ENCODE measurements at regions of chr17 and their contacts with region 1.

Region 1: GRCh38 chr17:42388381-42389134 is at the start of gene STAT3:
- DNase-seq: peak; percentile 99 to 100 (median 100)
- ATAC-seq: peak; percentile 83 to 93 (median 92)
- H3K4me3 ChIP-seq: peak within 1 kb of the TSS; percentile 75 to 81
- H3K4me3 Mint-ChIP-seq: peak within 1 kb of the TSS; percentile 90 to 95 (median 94)
- H3K27ac ChIP-seq: peak within 1 kb of the TSS; percentile 98
- H3K27ac Mint-ChIP-seq: peak within 1 kb of the TSS; percentile 100
- H3K4me1 ChIP-seq: peaks cover 13 to 20% of the 10 kb centered on the region in 2 experiments
- H3K4me1 Mint-ChIP-seq: peaks cover 48 to 52% (median 50%) of the 10 kb centered on the region in 3 donors
- H3K27me3 ChIP-seq: no peaks in the 10 kb centered on the region
- H3K27me3 Mint-ChIP-seq: no peaks in the 10 kb centered on the region
- total RNA-seq, gene STAT3: 113 to 242 (median 129) TPM

Region 2: DNA sequence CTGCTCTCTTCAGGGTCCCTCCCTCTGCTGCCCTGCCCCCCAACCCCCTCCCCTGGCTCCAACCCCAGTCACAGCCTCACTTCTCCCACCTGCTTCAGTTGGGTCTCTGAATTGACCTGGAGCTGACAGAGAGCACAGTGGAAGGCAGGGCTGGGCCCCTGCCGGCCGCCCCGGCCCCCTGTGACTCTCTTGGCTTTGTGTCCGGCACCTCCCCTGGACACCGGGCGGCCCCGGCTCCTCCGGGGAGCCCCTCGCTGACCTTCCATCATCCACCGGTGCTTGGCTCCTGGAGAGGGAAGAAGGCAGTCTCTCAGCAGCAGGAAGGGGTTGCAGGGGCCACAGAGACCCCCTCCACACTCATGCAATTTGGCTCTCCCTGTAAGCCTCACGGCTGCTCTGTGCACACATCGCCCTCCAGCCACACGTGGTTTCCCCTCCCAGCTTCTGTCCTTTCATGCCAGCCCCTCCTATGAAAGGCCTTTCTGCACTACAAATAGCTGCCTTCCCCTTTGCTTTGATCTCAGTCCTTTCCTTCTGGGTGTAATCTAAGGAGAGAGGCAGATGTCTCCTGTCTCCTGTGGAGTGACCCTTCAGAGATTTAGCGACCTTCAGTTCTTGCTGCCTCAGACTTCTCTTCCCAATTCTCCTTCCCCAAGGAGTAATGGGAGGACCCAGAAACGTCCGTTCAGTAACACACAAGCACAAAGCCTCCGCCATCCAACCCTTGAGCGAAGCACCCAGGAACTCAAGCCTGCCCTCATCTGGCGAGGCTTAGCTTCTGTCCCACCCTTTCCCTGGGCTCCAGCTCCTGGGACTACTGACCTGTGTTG is 360.4 kb before region 1 on chr17:
- CTCF ChIA-PET with region 1: no interaction called
- POLR2A ChIA-PET with region 1: no interaction called
- DNase-seq: no peak
- ATAC-seq: no peak
- H3K4me3 ChIP-seq: no peak overlapping the region
- H3K4me3 Mint-ChIP-seq: no peak overlapping the region
- H3K27ac ChIP-seq: no peak overlapping the region
- H3K27ac Mint-ChIP-seq: no peak overlapping the region
- H3K4me1 ChIP-seq: peaks cover 0 to 11% of the 10 kb centered on the region in 2 experiments
- H3K4me1 Mint-ChIP-seq: peaks cover 5 to 7% (median 5%) of the 10 kb centered on the region in 3 donors
- H3K27me3 ChIP-seq: peaks cover 0 to 19% of the 10 kb centered on the region in 2 experiments
- H3K27me3 Mint-ChIP-seq: peaks cover 0 to 3% of the 10 kb centered on the region in 2 donors

Region 3: GRCh38 chr17:42337442-42337841 is 51.1 kb before region 1 on chr17:
- CTCF ChIA-PET with region 1: interaction called in 1 of 2 experiments, 3 read pairs
- POLR2A ChIA-PET with region 1: interaction called, 8 to 13 read pairs
- DNase-seq: peak in 34 of 35 experiments; percentile 45 to 86 (median 70)
- ATAC-seq: peak; percentile 87 to 90 (median 88)
- H3K4me3 ChIP-seq: no peak overlapping the region
- H3K4me3 Mint-ChIP-seq: peak overlapping the region; percentile 60 to 71 (median 62)
- H3K27ac ChIP-seq: peak overlapping the region; percentile 74
- H3K27ac Mint-ChIP-seq: peak overlapping the region; percentile 98
- H3K4me1 ChIP-seq: peaks cover 15 to 43% of the 10 kb centered on the region in 2 experiments
- H3K4me1 Mint-ChIP-seq: peaks cover 35 to 54% (median 51%) of the 10 kb centered on the region in 3 donors
- H3K27me3 ChIP-seq: no peaks in the 10 kb centered on the region
- H3K27me3 Mint-ChIP-seq: no peaks in the 10 kb centered on the region

Region 4: DNA sequence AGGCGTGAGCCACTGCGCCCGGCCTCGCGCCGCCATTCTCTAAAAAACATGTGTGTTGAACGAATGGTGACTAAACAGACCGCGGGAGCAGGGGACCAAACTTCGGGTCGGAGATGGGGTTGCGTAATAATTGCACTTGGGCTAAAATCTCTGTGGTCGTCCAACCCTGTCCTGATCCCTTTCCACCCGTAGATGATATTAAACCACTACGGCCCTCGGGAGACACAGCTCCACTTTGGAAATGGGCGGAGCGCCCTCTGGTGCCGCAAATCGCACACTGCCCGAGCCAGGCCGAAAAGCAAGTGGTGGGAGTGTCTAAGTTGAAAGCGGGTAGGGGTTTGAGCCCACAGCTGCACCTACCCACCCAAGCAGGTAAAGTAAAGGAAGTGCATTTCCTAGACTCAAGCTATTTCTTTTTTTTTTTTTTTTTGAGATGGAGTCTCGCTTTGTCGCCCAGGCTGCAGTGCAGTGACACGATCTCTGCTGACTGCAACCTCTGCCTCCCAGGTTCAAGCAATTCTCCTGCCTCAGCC is 17.5 kb after region 1 on chr17:
- CTCF ChIA-PET with region 1: interaction called, 3 to 27 read pairs
- POLR2A ChIA-PET with region 1: interaction called in 1 of 2 experiments, 5 read pairs
- DNase-seq: peak; percentile 61 to 88 (median 80)
- ATAC-seq: peak; percentile 75 to 84 (median 80)
- H3K4me3 ChIP-seq: no peak overlapping the region
- H3K4me3 Mint-ChIP-seq: no peak overlapping the region
- H3K27ac ChIP-seq: no peak overlapping the region
- H3K27ac Mint-ChIP-seq: no peak overlapping the region
- H3K4me1 ChIP-seq: peaks cover 9 to 14% of the 10 kb centered on the region in 2 experiments
- H3K4me1 Mint-ChIP-seq: peaks cover 7 to 15% (median 12%) of the 10 kb centered on the region in 3 donors
- H3K27me3 ChIP-seq: peaks cover 0 to 19% of the 10 kb centered on the region in 2 experiments
- H3K27me3 Mint-ChIP-seq: peaks cover 0 to 4% of the 10 kb centered on the region in 2 donors

Region 5: GRCh38 chr17:43024407-43025289 is 636.1 kb after region 1 on chr17 and contains the start of gene RND2:
- CTCF ChIA-PET with region 1: no interaction called
- POLR2A ChIA-PET with region 1: interaction called in 1 of 2 experiments, 11 read pairs
- DNase-seq: peak; percentile 52 to 85 (median 71)
- ATAC-seq: peak; percentile 59 to 73 (median 68)
- H3K4me3 ChIP-seq: peak within 1 kb of the TSS; percentile 76 to 84
- H3K4me3 Mint-ChIP-seq: peak within 1 kb of the TSS; percentile 86 to 95 (median 87)
- H3K27ac ChIP-seq: peak within 1 kb of the TSS; percentile 57
- H3K27ac Mint-ChIP-seq: peak within 1 kb of the TSS; percentile 80
- H3K4me1 ChIP-seq: peaks cover 5 to 53% of the 10 kb centered on the region in 2 experiments
- H3K4me1 Mint-ChIP-seq: peaks cover 23 to 34% (median 29%) of the 10 kb centered on the region in 3 donors
- H3K27me3 ChIP-seq: no peaks in the 10 kb centered on the region
- H3K27me3 Mint-ChIP-seq: no peaks in the 10 kb centered on the region
- total RNA-seq, gene RND2: 0.08 to 0.64 (median 0.32) TPM

Measured in T-cell (primary cell).